ENCODE measurements at regions of chr15 and their contacts with region 1.

Region 1: GRCh38 chr15:66883322-66883911 is 181.4 kb downstream of the SMAD6 start:
- DNase-seq: peak; percentile 96 to 99
- ATAC-seq: peak; percentile 87 to 91
- H3K4me3 ChIP-seq: no peak overlapping the region
- H3K27ac ChIP-seq: peak overlapping the region; percentile 75 to 89
- H3K4me1 ChIP-seq: peaks cover 55% of the 10 kb centered on the region
- CTCF ChIP-seq: no peak
- EP300 ChIP-seq: peak; percentile 83 to 95; a peak in 4 of 5 replicates
- POLR2A ChIP-seq: no peak
- RAD21 ChIP-seq: peak; percentile 34 to 61

Region 2: DNA sequence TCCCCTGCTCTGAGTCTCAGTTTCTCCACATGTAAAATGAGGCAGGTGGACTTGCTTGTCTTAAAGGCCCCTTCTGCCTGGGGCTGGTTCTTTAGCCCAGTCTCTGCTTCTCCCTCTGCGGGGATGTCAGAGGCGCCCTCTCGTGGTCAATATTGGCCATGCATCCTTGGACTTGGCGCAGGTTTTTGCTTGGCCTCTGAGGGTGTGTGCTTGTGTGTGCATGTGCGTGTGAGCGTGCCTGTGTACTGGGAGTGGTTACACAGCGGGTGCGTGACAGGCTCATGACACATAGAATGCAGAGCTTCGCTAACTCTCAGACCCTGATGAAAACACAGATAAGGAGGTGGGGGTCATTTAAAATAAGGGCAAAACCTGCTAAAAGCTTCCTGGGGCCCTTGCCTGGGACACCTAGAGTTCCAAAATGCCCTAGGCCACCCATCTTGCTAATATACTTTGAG is 20.5 kb before region 1 on chr15:
- CTCF ChIA-PET with region 1: interaction called, 42 read pairs
- POLR2A ChIA-PET with region 1: no interaction called
- DNase-seq: peak; percentile 87 to 90
- ATAC-seq: peak; percentile 85 to 97
- H3K4me3 ChIP-seq: no peak overlapping the region
- H3K27ac ChIP-seq: peak overlapping the region; percentile 1 to 66; a peak in 4 of 6 replicates
- H3K4me1 ChIP-seq: peaks cover 17% of the 10 kb centered on the region
- CTCF ChIP-seq: peak; percentile 98
- EP300 ChIP-seq: no peak
- POLR2A ChIP-seq: no peak
- RAD21 ChIP-seq: peak; percentile 83 to 87

Region 3: DNA sequence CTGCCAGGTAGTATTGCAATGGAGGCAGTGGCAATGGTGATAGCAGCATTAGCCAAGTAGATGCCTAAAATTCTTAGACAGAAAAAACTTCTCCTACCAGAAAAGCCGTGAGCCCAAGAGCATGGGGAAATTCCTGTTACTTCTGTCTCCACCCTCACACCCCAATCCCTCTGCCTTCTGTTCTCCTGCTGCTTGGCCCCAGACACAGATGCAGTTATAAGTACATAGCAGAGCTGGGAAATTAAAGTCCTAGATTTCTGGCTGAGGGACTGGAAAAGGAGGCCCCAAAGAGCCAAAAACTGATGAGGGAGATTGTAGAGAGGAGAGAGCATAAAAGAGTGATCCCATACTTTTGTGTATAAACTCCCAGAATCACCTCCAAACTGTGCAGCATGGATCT is 14.5 kb before region 1 on chr15:
- CTCF ChIA-PET with region 1: interaction called, 42 read pairs
- POLR2A ChIA-PET with region 1: interaction called, 3 read pairs
- DNase-seq: no peak
- ATAC-seq: no peak
- H3K4me3 ChIP-seq: no peak overlapping the region
- H3K27ac ChIP-seq: 0 out of 6 replicates have a peak overlapping the region, but pooled peaks of 1 of the 2 experiments have one; percentile 4
- H3K4me1 ChIP-seq: peaks cover 6% of the 10 kb centered on the region; the same call in 1 of the 3 replicates
- CTCF ChIP-seq: no peak
- EP300 ChIP-seq: no peak
- POLR2A ChIP-seq: no peak
- RAD21 ChIP-seq: no peak

Region 4: DNA sequence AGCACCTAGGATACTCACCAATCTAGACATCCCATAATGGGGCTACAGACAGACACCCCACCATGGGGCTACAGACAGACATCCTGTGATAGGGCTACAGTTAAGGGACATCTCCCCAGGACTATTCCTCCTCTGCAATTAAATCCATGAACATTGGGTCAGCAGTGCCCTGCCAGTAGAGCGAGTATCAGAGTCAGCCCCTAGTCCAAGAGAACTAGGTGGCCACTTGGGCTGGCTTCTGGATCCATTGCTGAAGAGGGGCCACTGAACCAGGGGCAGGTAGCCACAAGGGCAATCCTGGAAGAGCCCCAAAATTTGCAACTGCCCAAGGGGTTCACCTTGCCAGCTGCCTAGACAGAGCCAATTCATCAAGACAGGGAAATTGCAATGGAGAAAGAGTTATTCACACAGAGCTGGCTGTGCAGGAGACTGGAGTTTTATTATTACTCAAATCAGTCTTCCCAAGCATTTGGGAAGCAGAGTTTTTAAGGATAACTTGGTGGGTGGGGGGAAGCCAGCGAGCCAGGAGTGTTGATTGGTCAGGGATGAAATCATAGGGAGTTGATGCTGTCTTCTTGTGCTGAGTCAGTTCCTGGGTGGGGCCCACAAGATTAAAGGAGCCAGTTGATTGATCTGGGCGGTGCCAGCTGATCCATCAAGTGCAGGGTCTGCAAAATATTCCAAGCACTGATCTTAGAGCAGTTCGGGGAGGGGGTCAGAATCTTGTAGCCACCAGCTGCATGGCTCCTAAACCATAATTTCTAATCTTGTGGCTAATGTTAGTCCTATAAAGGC is 11.8 kb after region 1 on chr15:
- CTCF ChIA-PET with region 1: interaction called, 67 read pairs
- POLR2A ChIA-PET with region 1: no interaction called
- DNase-seq: no peak
- ATAC-seq: no peak
- H3K4me3 ChIP-seq: no peak overlapping the region
- H3K27ac ChIP-seq: peak overlapping the region in 1 of 2 experiments; percentile 43; a peak in 4 of 6 replicates
- H3K4me1 ChIP-seq: peaks cover 46% of the 10 kb centered on the region
- CTCF ChIP-seq: no peak
- EP300 ChIP-seq: no peak
- POLR2A ChIP-seq: no peak
- RAD21 ChIP-seq: no peak

Region 5: GRCh38 chr15:66901336-66902100 is 18.1 kb after region 1 on chr15:
- CTCF ChIA-PET with region 1: interaction called, 67 read pairs
- POLR2A ChIA-PET with region 1: no interaction called
- DNase-seq: peak in 1 of 2 experiments; percentile 45
- ATAC-seq: no peak
- H3K4me3 ChIP-seq: no peak overlapping the region
- H3K27ac ChIP-seq: peak overlapping the region; percentile 1 to 61; a peak in 3 of 6 replicates
- H3K4me1 ChIP-seq: peaks cover 29% of the 10 kb centered on the region
- CTCF ChIP-seq: no peak
- EP300 ChIP-seq: no peak
- POLR2A ChIP-seq: no peak
- RAD21 ChIP-seq: no peak

Region 6: DNA sequence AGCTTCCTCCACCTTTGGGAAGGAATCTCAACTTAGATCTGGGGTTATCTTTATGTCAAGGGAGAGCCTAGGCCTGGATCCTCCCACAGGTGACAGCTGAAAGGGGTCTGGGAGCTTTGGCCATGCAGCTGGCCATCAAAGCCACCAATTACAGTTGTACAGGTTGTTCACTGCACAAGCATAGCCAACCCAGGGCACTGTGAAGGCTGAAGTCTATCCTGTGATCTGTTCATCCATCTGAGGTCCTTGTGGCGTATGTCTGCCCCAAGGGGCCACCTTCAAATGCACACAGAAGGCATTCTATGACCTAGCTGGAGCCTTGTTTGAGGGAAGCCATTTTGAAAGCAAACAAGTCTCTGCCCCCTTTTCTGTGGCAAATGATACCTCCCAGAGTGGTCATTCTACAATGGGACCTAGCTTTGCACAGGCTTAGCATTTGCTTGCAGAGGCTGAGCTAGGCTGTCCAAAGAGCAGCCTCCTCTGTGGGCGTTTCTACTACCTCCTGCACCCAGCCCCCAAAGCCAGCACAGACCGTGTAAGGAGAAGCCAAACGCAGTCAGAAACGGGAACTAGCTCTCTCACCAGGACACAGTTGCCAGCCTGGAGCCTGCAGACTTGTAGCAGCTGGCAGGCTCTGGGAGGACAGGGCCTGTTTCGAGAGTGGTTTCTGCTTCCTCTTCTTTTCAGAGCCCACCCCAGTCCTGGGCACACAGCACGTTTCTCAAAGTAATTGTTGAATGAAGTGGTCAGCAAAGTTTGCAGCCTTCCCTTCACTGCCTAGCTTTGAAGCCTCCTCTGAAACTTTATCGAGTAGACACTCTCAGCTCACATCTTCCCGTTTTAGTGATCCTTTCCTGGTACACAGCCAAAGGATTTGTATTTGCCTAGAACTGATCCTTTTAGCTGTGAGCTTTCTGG is 24.7 kb after region 1 on chr15:
- CTCF ChIA-PET with region 1: interaction called, 67 read pairs
- POLR2A ChIA-PET with region 1: no interaction called
- DNase-seq: no peak
- ATAC-seq: peak; percentile 7 to 15; a peak in 2 of 6 replicates
- H3K4me3 ChIP-seq: no peak overlapping the region
- H3K27ac ChIP-seq: peak overlapping the region in 1 of 2 experiments; percentile 38; a peak in 2 of 6 replicates
- H3K4me1 ChIP-seq: peaks cover 12% of the 10 kb centered on the region; the same call in 2 of the 3 replicates
- CTCF ChIP-seq: no peak
- EP300 ChIP-seq: no peak
- POLR2A ChIP-seq: no peak
- RAD21 ChIP-seq: no peak

Region 7: GRCh38 chr15:66931768-66932633 is 48.6 kb after region 1 on chr15:
- CTCF ChIA-PET with region 1: interaction called, 3 read pairs
- POLR2A ChIA-PET with region 1: interaction called, 11 read pairs
- DNase-seq: peak; percentile 96 to 97
- ATAC-seq: peak; percentile 97
- H3K4me3 ChIP-seq: peak overlapping the region; percentile 2; the same call in 1 of the 3 replicates
- H3K27ac ChIP-seq: peak overlapping the region; percentile 91 to 93
- H3K4me1 ChIP-seq: peaks cover 46% of the 10 kb centered on the region
- CTCF ChIP-seq: no peak
- EP300 ChIP-seq: peak; percentile 76 to 88; a peak in 4 of 5 replicates
- POLR2A ChIP-seq: no peak
- RAD21 ChIP-seq: peak in 1 of 2 experiments; percentile 44; a peak in 4 of 5 replicates

Measured in A549 (cell line).